Activated T-helper 1 cell treated with anti-CD3 and anti-CD28 coated beads, Interleukin-12 subunit alpha, Interleukin-12 subunit beta, Interleukin-2, Interleukin-4 antibody, amounts not matched to agents 30 ng/mL and 10 ng/mL and 1 ng/mL, durations not matched to agents 14 hours and 24 hours and 36 hours (primary cell): ENCODE measurements at regions of chr7 and their contacts with region 1.

Region 1: DNA sequence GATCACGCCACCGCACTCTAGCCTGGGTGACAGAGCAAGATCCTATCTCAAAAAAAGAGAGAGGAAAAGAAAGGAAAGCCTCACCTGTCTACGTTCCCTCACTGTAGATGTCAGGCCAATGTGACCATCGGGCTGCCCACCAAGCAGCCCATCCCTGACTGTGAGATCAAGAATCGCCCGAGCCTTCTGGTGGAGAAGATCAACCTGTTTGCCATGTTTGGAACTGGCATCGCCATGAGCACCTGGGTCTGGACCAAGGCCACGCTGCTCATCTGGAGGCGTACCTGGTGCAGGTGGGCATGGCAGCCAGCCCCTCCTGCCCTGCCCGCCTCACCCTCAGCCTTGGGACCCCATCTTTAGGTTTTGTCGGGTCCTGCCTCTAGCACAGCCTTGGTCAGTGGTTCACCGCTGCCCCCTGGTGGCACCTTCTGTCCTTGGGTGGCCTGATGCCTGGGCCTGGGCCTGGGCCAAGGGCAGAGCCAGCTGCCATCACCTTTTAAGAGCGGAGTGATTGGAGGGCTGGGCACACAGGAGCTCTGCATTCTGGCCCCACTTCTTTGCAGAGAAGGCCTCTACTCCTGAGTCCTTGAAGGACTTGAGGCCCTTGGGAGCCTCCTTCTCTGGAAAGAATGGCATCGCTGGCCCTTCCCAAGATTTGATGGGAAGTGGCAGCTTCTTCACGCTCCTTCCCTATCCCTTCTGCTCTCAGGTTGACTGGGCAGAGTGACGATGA is 14.4 kb upstream of the AHCYL2 start:
- DNase-seq: peak; percentile 44
- H3K4me3 Mint-ChIP-seq: no peak overlapping the region
- H3K27ac Mint-ChIP-seq: no peak overlapping the region
- H3K4me1 Mint-ChIP-seq: no peaks in the 10 kb centered on the region
- H3K27me3 Mint-ChIP-seq: no peaks in the 10 kb centered on the region

Region 2: DNA sequence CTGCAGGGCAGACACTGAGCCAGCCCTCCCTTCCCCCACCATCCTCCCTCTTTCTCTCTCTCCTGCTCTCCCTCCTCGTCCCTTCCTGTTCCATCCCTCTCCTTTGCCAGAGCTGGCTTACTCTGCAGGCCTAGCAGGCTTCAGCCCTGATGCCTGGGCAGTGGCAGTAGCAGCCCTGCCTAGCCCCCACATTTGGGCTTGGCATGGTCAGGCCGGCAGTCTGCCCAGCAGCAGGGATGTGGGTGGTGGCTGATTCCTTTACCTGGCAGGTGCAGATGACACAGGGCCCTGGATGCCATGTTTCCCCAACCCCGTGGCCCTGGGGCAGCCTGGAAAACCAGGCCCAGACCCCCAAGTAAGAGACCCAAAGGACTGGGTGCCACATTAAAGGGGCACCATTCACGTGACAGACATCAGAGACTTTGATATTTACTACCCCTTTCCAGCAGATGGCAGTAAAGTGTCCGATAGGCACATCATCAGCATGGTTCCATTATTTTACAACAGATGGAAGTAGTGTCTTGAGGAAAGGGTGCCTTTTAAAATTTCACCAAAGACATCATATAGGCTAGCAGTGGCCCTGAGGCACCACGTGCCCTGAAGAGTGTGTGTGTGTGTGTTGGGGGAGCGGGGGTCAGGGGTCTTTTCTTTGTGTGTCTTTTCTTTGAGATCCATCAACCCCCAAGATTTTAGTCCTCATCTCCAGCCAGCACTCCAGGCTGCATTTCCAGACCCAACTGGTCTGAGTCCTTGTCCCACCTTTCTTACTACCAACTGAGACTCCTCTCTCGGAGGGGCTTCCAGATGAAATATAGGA is 305.8 kb before region 1 on chr7:
- intact Hi-C with region 1: loop called (anchors 1 kb)
- DNase-seq: no peak
- H3K4me3 Mint-ChIP-seq: no peak overlapping the region
- H3K27ac Mint-ChIP-seq: no peak overlapping the region
- H3K4me1 Mint-ChIP-seq: no peaks in the 10 kb centered on the region
- H3K27me3 Mint-ChIP-seq: peaks cover 30% of the 10 kb centered on the region

Region 3: DNA sequence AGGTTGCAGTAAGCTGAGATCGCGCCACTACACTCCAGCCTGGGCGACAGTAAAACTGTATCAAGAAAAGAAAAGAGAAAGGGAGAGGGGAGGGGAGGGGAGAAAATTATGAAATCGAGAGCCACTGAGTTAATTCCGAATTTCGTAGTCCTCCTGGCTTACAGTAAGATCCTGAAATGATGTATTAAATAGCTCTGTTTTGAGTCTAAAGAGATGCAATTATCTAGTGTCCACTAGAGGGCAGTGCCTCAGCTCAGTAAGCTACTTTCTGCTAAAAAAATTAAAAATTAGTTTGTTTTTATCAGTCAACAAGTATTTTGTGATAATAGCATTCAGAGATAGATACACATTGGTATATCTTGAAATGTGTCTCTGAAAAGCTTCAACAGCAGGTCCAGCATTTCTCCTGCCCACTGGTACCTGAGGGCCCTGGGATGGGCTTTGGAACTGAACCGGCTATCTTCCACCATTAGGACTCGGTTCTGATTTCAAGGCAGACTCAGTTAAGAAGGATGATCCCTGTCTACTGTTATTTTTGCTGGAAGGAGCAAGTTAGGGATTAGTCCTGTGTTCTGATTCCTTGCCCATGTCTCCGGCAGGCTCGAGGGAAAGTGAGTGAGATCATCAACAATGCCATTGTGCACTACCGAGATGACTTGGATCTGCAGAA is 46.4 kb before region 1 on chr7:
- intact Hi-C with region 1: loop called (anchors 1 kb)
- DNase-seq: no peak
- H3K4me3 Mint-ChIP-seq: no peak overlapping the region
- H3K27ac Mint-ChIP-seq: no peak overlapping the region
- H3K4me1 Mint-ChIP-seq: peaks cover 5% of the 10 kb centered on the region
- H3K27me3 Mint-ChIP-seq: no peaks in the 10 kb centered on the region